ENCODE measurements at regions of chr7 and their contacts with region 1.

Region 1: GRCh38 chr7:20598459-20599309 is 16.8 kb upstream of the ABCB5 start:
- DNase-seq: no peak
- H3K4me3 ChIP-seq: no peak overlapping the region
- H3K27ac ChIP-seq: no peak overlapping the region
- H3K4me1 ChIP-seq: no peaks in the 10 kb centered on the region
- H3K27me3 ChIP-seq: peaks cover 0 to 1% (median 0%) of the 10 kb centered on the region in 4 experiments; a peak in 1 of 7 replicates
- CTCF ChIP-seq: peak in 2 of 3 experiments; percentile 59 to 73; a peak in 2 of 4 replicates
- EP300 ChIP-seq: no peak
- POLR2A ChIP-seq: no peak
- RAD21 ChIP-seq: peak; percentile 96 to 97

Region 2: GRCh38 chr7:19708397-19709248 is 890.1 kb before region 1 on chr7 and contains the start of gene POLR1F:
- CTCF ChIA-PET with region 1: interaction called, 32 read pairs
- POLR2A ChIA-PET with region 1: no interaction called
- DNase-seq: peak; percentile 93 to 98
- H3K4me3 ChIP-seq: peak within 1 kb of the TSS; percentile 70 to 99 (median 96)
- H3K27ac ChIP-seq: peak within 1 kb of the TSS; percentile 79
- H3K4me1 ChIP-seq: peaks cover 0 to 3% (median 1%) of the 10 kb centered on the region in 4 experiments; a peak in 2 of 7 replicates
- H3K27me3 ChIP-seq: no peaks in the 10 kb centered on the region
- CTCF ChIP-seq: peak; percentile 85 to 94 (median 89)
- EP300 ChIP-seq: peak in 1 of 2 experiments; percentile 51; a peak in 1 of 3 replicates
- POLR2A ChIP-seq: peak; percentile 98 to 99
- RAD21 ChIP-seq: peak; percentile 73 to 78
- total RNA-seq, gene POLR1F: 23.5 and 24.6 TPM in 2 replicates

Region 3: DNA sequence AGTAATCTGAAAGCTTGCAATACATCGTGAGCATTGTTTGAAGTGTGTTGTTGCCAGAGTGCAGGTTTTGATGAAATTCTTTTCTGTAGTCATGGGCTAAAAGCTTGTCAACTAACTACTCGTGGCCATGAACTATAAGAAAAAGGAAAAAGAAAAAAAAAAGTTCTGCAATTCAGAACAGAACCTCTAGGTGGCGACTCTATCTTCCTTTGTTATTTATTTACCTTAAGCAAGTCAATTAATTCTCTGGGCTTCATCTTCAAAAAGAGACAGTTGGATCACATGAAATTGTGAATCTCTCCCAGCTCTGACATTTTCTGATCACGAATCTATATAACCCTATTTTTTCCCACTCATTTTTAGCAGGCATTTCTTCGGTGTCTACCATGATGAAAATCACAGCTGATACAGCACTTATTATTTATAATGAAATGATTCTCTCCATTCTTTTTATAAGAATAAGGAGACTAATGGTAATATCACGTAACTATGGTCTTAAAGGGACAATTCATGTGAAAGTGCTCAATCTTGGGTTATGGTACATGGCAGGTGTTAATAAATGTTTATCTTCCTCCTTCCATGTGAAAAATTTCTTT is 844.1 kb before region 1 on chr7:
- CTCF ChIA-PET with region 1: interaction called, 12 read pairs
- POLR2A ChIA-PET with region 1: no interaction called
- DNase-seq: no peak
- H3K4me3 ChIP-seq: no peak overlapping the region
- H3K27ac ChIP-seq: no peak overlapping the region
- H3K4me1 ChIP-seq: no peaks in the 10 kb centered on the region
- H3K27me3 ChIP-seq: no peaks in the 10 kb centered on the region
- CTCF ChIP-seq: peak in 2 of 3 experiments; percentile 25 to 51; a peak in 2 of 4 replicates
- EP300 ChIP-seq: no peak
- POLR2A ChIP-seq: no peak
- RAD21 ChIP-seq: peak; percentile 60 to 61

Region 4: GRCh38 chr7:20440472-20441105 is 158.1 kb before region 1 on chr7:
- CTCF ChIA-PET with region 1: interaction called, 10 read pairs
- POLR2A ChIA-PET with region 1: no interaction called
- DNase-seq: peak; percentile 64 to 86
- H3K4me3 ChIP-seq: no peak overlapping the region
- H3K27ac ChIP-seq: no peak overlapping the region
- H3K4me1 ChIP-seq: no peaks in the 10 kb centered on the region; a peak in 1 of 7 replicates
- H3K27me3 ChIP-seq: no peaks in the 10 kb centered on the region
- CTCF ChIP-seq: peak; percentile 70 to 76 (median 70)
- EP300 ChIP-seq: no peak
- POLR2A ChIP-seq: no peak
- RAD21 ChIP-seq: peak; percentile 72

Region 5: DNA sequence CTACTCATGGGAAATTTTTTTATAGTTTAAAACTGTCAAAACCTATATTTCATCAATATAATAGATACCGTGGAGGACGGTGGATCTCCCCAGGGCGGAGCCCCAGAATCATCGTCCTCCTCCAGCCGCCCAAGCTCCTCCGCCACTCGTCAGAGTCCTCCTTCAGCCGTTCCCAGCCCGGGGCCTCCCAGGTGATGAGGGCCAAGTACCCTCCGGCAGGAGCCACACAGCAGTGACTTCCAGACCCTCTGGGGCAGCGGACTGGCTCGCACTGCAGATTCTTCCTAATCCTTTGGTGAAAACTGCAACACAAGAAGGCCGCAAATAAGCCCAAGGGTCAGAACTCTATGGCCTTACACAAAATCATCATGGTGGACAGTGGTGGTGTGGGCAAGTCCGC is 10.0 kb before region 1 on chr7:
- CTCF ChIA-PET with region 1: interaction called, 20 read pairs
- POLR2A ChIA-PET with region 1: no interaction called
- DNase-seq: no peak
- H3K4me3 ChIP-seq: no peak overlapping the region
- H3K27ac ChIP-seq: no peak overlapping the region
- H3K4me1 ChIP-seq: no peaks in the 10 kb centered on the region
- H3K27me3 ChIP-seq: no peaks in the 10 kb centered on the region
- CTCF ChIP-seq: no peak
- EP300 ChIP-seq: no peak
- POLR2A ChIP-seq: no peak
- RAD21 ChIP-seq: no peak

Region 6: DNA sequence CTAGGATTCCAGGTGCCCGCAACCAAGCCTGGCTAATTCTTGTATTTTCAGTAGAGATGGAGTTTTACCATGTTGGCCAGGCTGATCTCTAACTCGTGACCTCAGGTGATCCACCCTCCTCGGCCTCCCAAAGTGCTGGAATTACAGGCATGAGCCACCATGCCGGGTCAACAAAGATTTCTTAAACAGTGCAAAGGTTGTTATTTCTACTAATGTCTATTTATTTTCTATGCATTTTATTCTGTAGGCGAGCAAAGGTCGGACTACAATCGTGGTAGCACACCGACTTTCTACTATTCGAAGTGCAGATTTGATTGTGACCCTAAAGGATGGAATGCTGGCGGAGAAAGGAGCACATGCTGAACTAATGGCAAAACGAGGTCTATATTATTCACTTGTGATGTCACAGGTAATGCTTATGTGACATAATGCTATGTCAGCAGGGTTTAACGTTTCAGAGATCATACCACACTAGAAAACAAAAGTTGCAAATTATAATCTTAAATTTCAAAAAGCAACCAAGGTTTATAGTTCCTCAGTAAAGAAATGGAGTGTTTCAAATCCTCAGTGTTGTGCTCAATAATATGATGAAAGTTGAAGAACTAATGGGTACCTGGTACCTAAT is 82.7 kb after region 1 on chr7:
- CTCF ChIA-PET with region 1: no interaction called
- POLR2A ChIA-PET with region 1: no interaction called
- DNase-seq: no peak
- H3K4me3 ChIP-seq: no peak overlapping the region
- H3K27ac ChIP-seq: no peak overlapping the region
- H3K4me1 ChIP-seq: no peaks in the 10 kb centered on the region
- H3K27me3 ChIP-seq: no peaks in the 10 kb centered on the region
- CTCF ChIP-seq: no peak
- EP300 ChIP-seq: no peak
- POLR2A ChIP-seq: no peak
- RAD21 ChIP-seq: no peak